ENCODE measurements at regions of chr6 and their contacts with region 1.

Region 1: GRCh38 chr6:133286765-133287164 is 45.6 kb downstream of the EYA4 start:
- DNase-seq: no peak
- H3K4me3 ChIP-seq: no peak overlapping the region
- H3K27ac ChIP-seq: no peak overlapping the region
- H3K4me1 ChIP-seq: no peaks in the 10 kb centered on the region
- H3K27me3 ChIP-seq: no peaks in the 10 kb centered on the region
- CTCF ChIP-seq: peak in 2 of 3 experiments; percentile 39 to 57; a peak in 2 of 4 replicates
- EP300 ChIP-seq: no peak
- POLR2A ChIP-seq: no peak
- RAD21 ChIP-seq: peak; percentile 66 to 74

Region 2: DNA sequence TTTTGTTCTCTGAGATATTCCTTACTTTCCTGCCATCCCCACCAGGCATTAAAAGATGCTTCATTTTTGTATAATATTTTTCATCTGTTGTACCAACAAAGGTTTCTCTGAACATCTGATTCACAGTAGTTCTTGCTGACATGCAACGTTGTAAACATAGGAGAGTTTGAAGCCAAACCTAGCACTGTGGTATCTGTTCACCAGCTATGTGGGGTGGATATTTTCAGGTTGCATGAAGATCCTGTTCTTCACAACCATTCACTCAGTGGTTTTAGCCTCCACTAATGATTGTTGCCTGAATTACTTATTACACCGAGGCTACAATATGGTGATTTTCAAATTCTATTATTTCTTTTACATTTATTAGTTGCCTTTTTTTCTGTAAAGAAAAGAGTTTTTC is 10.9 kb after region 1 on chr6:
- CTCF ChIA-PET with region 1: no interaction called
- POLR2A ChIA-PET with region 1: no interaction called
- DNase-seq: no peak
- H3K4me3 ChIP-seq: no peak overlapping the region
- H3K27ac ChIP-seq: no peak overlapping the region
- H3K4me1 ChIP-seq: 0 out of 7 replicates have a peak, but pooled peaks cover 0 to 2% (median 0%) of the 10 kb centered on the region in 4 experiments
- H3K27me3 ChIP-seq: no peaks in the 10 kb centered on the region
- CTCF ChIP-seq: no peak
- EP300 ChIP-seq: no peak
- POLR2A ChIP-seq: no peak
- RAD21 ChIP-seq: no peak

Region 3: DNA sequence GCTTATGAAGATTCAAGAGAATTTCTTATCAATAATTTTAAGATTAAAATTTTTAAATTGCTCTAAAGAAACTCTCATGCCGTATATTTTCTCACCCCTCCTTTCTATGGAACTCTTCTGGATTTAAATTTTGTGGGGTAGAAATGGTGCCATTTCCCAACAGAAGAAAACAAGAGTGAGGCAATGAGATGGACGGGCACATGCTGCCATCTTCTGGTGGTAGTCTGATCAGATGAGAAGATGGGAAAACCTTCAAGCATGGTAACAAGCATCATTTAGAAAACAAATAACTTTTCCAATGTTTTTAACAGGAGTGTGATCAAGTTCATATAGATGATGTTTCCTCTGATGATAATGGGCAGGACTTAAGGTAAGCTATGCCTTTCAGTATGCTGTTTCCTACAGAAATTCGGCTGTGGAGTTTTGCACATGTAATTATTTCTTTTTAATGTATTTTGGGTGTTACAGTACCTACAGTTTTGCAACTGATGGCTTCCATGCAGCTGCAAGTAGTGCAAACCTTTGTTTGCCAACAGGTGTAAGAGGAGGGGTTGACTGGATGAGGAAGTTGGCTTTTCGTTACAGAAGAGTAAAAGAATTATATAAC is 225.7 kb after region 1 on chr6:
- CTCF ChIA-PET with region 1: interaction called, 10 read pairs
- POLR2A ChIA-PET with region 1: no interaction called
- DNase-seq: peak in 1 of 2 experiments; percentile 68
- H3K4me3 ChIP-seq: no peak overlapping the region
- H3K27ac ChIP-seq: no peak overlapping the region
- H3K4me1 ChIP-seq: no peaks in the 10 kb centered on the region
- H3K27me3 ChIP-seq: no peaks in the 10 kb centered on the region
- CTCF ChIP-seq: peak; percentile 3 to 72 (median 68)
- EP300 ChIP-seq: no peak
- POLR2A ChIP-seq: no peak
- RAD21 ChIP-seq: peak; percentile 94 to 97

Measured in H1 (cell line).